Activated CD4-positive, alpha-beta T cell treated with anti-CD3 and anti-CD28 coated beads, Interleukin-2, amount 10 ng/mL, durations not matched to agents 24 days and 14 days (primary cell): ENCODE measurements at regions of chr5 and their contacts with region 1.

Region 1: DNA sequence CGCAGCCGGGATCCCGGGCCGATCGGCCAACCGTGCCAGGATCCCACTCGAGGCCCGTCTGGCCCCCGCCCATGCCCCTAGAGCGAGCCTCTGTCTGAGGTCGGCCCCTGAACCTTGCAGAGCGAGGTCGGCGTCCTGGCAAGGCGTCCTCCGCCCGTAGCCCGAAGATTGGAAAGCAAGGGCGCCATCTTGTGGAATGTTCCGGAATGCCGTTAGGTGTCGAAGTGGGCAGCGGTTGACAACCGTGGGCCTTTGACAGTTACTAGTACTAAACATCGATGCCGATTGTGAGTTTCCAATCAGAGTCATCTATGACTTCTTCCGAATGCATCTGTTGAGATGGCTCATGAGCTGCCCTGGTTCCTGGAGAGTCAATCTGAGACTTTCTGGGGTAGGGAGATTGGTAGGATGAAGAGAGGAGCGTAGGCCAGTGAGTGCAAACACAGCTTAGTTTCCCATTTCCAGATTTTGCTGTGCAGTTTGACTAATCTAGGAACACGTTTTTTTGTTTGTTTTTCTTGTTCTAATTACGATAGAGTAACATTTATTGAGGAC is 923 bp upstream of the PLK2 start:
- DNase-seq: peak; percentile 97
- H3K4me3 Mint-ChIP-seq: peak overlapping the region; percentile 85
- H3K27ac Mint-ChIP-seq: peak overlapping the region; percentile 43
- H3K4me1 Mint-ChIP-seq: peaks cover 20% of the 10 kb centered on the region
- H3K27me3 Mint-ChIP-seq: peaks cover 22% of the 10 kb centered on the region

Region 2: GRCh38 chr5:56951946-56952691 is 1508.7 kb before region 1 on chr5 and contains the start of gene MIER3:
- intact Hi-C with region 1: loop called (anchors 1 kb)
- DNase-seq: peak; percentile 95
- H3K4me3 Mint-ChIP-seq: peak within 1 kb of the TSS; percentile 98
- H3K27ac Mint-ChIP-seq: peak within 1 kb of the TSS; percentile 90
- H3K4me1 Mint-ChIP-seq: peaks cover 20% of the 10 kb centered on the region
- H3K27me3 Mint-ChIP-seq: peaks cover 39% of the 10 kb centered on the region
- total RNA-seq, gene MIER3: 35.4 and 37.6 TPM in 2 replicates

Region 3: DNA sequence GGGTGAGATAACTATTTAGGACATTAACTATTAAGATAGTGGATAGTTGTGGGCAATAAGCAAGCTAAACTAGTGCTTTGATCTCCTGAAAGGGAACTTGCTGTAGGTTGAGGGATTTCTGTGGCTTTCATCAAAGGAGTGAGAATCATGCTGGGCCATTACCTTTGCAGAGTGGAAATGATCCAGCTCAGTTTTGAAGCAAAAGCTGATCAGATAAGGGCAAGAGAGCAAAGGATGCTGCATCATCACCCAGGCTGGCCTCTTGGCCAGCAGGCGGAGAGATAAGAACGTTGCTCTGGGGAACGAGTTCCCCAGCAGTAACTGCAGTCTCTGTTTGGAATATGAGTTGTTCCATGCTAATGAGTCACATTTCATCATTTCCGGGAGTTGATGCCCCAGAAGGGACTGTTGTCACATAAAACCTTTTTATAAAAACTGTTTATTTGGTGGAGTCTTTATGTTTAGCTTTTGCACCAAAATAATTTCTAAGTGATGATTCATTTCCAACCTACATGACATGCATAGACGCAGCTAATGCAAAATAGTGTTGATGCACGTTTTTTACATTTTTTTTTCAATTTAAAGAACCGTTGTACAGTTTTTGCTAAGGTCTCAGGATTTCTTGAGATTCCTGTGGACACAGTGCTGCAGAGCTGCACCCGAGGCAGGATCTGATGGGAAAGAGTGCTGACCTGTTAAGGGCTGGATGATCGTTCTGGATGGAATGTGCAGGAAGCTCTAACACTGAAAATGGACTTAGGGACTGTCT is 1077.5 kb before region 1 on chr5:
- intact Hi-C with region 1: loop called (anchors 1 kb)
- DNase-seq: peak; percentile 80
- H3K4me3 Mint-ChIP-seq: peak overlapping the region; percentile 25
- H3K27ac Mint-ChIP-seq: peak overlapping the region; percentile 76
- H3K4me1 Mint-ChIP-seq: peaks cover 9% of the 10 kb centered on the region
- H3K27me3 Mint-ChIP-seq: no peaks in the 10 kb centered on the region

Region 4: GRCh38 chr5:57650360-57651069 is 810.3 kb before region 1 on chr5:
- intact Hi-C with region 1: loop called (anchors 1 kb)
- DNase-seq: peak; percentile 70
- H3K4me3 Mint-ChIP-seq: no peak overlapping the region
- H3K27ac Mint-ChIP-seq: no peak overlapping the region
- H3K4me1 Mint-ChIP-seq: no peaks in the 10 kb centered on the region
- H3K27me3 Mint-ChIP-seq: peaks cover 16% of the 10 kb centered on the region